Activated T-helper 1 cell treated with anti-CD3 and anti-CD28 coated beads, Interleukin-12 subunit alpha, Interleukin-12 subunit beta, Interleukin-2, Interleukin-4 antibody, amounts not matched to agents 30 ng/mL and 10 ng/mL and 1 ng/mL, durations not matched to agents 14 hours and 24 hours and 36 hours (primary cell): ENCODE measurements at regions of chr6 and their contacts with region 1.

Region 1: DNA sequence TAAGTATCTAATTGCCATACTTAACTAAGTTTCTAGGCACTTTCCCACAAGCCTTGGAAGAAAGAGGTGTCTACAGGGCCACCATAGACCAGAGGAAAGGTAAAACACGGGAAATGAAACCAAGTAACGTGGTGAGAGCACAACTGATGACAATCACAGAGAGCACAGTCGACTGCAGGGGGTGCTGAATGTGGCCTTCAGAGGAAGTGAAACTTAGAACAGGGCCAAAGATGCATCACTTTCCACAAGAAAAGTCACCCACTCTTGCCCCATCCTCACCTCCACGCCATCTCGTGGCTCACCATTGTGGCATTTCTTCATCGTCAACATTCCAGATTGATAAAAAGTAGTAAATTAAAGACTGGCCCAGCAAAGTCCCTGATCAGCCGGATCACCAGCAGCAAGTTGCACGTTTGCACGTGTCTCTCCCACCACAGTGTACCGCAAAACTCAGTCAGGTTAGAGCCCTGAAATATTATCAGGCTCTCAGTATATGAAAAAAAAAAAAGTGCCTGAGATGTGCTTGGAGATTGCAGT is 31.4 kb downstream of the HIVEP2 start:
- DNase-seq: peak; percentile 73
- H3K4me3 Mint-ChIP-seq: peak overlapping the region; percentile 64
- H3K27ac Mint-ChIP-seq: peak overlapping the region; percentile 92
- H3K4me1 Mint-ChIP-seq: peaks cover 63% of the 10 kb centered on the region
- H3K27me3 Mint-ChIP-seq: no peaks in the 10 kb centered on the region

Region 2: DNA sequence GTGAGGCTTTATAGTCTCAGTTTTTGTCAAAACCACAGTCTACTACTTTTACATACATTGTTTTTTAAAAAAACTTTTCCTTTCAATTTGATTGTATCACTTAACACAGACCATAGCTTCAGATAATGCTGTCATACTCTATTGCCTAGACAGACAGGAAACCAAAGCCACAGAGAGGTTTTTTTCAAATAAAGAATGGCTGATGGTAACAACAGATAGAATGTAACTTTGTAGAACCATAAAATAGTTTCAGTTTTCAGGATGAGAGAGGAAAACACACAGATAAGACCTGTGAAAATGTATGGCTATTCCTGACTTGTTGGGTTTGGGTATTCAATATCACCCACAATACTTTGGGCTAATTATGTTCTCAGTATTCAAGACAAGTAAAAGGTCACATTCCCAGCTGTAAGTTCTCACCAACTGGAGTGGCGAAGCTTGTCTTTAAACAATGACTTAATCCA is 517.8 kb before region 1 on chr6:
- intact Hi-C with region 1: loop called (anchors 5 kb)
- DNase-seq: peak; percentile 12
- H3K4me3 Mint-ChIP-seq: no peak overlapping the region
- H3K27ac Mint-ChIP-seq: peak overlapping the region; percentile 10
- H3K4me1 Mint-ChIP-seq: peaks cover 15% of the 10 kb centered on the region
- H3K27me3 Mint-ChIP-seq: peaks cover 56% of the 10 kb centered on the region

Region 3: GRCh38 chr6:142763205-142763604 is 150.4 kb before region 1 on chr6:
- intact Hi-C with region 1: no loop called
- DNase-seq: no peak
- H3K4me3 Mint-ChIP-seq: no peak overlapping the region
- H3K27ac Mint-ChIP-seq: no peak overlapping the region
- H3K4me1 Mint-ChIP-seq: peaks cover 16% of the 10 kb centered on the region
- H3K27me3 Mint-ChIP-seq: no peaks in the 10 kb centered on the region

Region 4: DNA sequence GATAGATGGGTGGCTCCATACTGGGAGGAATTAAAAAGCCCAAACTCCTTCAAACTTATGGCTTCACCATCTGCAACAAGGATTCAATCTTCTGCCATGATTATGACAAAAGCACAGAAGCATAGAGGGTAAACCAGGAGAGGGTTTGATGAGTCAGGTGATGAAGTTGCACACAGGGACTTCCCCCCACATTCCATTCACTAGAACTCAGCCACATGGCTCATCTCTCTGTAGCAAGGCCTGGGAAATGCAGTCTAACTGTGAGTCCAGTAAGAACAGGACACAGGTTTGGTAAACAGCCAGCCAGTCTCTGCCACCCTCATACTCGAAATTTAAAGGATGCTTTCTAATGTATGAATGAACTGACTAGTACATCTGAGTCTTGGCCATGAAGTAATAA is 111.5 kb before region 1 on chr6:
- intact Hi-C with region 1: loop called (anchors 1 kb)
- DNase-seq: no peak
- H3K4me3 Mint-ChIP-seq: peak overlapping the region; percentile 55
- H3K27ac Mint-ChIP-seq: peak overlapping the region; percentile 82
- H3K4me1 Mint-ChIP-seq: peaks cover 80% of the 10 kb centered on the region
- H3K27me3 Mint-ChIP-seq: no peaks in the 10 kb centered on the region

Region 5: DNA sequence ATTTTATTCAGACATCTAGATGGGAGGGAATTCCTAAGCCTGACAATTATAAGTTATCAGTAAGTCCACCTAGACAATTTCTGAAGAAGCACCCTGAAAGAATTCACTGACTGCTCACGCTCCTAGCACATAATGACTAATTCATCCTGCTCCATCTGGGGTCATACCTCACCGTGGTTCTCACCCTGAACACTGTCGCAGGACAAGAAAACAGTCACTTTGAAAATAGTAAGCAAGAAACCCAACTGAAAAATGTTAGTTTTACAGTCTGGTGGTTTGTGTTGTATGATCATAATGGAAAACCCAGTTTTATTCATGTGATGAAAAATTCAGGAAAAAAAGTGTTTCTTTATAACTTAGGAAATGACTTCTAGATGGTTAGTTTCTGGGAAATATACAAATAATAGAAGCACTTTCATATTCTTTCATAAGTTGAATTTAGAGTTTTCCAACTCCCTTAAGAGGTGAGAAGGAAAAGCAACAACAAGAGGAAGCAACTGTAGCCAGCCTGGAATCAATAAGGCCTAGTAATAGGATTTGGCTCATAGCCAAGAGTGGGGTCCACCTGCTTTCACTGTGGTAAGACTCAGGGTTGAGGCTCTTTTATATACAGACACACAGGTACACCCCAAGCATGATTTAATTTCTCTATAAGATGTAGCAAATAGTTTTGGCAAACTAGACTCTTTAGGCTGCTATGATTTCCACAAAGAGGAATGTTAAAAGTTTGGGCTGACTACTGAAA is 62.7 kb before region 1 on chr6:
- intact Hi-C with region 1: loop called (anchors 1 kb)
- DNase-seq: peak; percentile 41
- H3K4me3 Mint-ChIP-seq: peak overlapping the region; percentile 40
- H3K27ac Mint-ChIP-seq: peak overlapping the region; percentile 89
- H3K4me1 Mint-ChIP-seq: peaks cover 91% of the 10 kb centered on the region
- H3K27me3 Mint-ChIP-seq: no peaks in the 10 kb centered on the region

Region 6: DNA sequence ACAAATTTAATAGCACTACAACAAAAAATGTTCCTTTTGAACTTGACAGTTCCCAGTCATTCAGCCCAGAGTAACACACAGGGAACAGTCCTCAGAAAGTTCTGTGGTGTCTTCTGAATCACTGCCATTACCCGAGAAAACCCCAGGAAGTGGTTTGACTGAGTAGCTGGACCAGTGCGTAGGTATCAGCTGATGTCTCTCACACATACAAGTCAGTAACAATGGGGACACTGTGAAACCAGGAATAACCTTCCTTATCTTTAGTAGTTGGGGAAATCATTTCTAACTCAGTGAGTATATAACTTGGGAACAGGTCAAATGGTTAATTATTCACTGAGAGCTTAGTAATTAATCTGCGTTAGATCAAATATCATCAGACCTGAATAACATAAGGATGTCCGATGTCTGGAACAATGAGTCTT is 41.7 kb before region 1 on chr6:
- intact Hi-C with region 1: loop called (anchors 1 kb)
- DNase-seq: peak; percentile 55
- H3K4me3 Mint-ChIP-seq: peak overlapping the region; percentile 40
- H3K27ac Mint-ChIP-seq: peak overlapping the region; percentile 78
- H3K4me1 Mint-ChIP-seq: peaks cover 86% of the 10 kb centered on the region
- H3K27me3 Mint-ChIP-seq: no peaks in the 10 kb centered on the region

Region 7: GRCh38 chr6:142902636-142903053 is 10.9 kb before region 1 on chr6:
- intact Hi-C with region 1: loop called (anchors 1 kb)
- DNase-seq: peak; percentile 76
- H3K4me3 Mint-ChIP-seq: peak overlapping the region; percentile 49
- H3K27ac Mint-ChIP-seq: peak overlapping the region; percentile 91
- H3K4me1 Mint-ChIP-seq: peaks cover 63% of the 10 kb centered on the region
- H3K27me3 Mint-ChIP-seq: no peaks in the 10 kb centered on the region

Region 8: DNA sequence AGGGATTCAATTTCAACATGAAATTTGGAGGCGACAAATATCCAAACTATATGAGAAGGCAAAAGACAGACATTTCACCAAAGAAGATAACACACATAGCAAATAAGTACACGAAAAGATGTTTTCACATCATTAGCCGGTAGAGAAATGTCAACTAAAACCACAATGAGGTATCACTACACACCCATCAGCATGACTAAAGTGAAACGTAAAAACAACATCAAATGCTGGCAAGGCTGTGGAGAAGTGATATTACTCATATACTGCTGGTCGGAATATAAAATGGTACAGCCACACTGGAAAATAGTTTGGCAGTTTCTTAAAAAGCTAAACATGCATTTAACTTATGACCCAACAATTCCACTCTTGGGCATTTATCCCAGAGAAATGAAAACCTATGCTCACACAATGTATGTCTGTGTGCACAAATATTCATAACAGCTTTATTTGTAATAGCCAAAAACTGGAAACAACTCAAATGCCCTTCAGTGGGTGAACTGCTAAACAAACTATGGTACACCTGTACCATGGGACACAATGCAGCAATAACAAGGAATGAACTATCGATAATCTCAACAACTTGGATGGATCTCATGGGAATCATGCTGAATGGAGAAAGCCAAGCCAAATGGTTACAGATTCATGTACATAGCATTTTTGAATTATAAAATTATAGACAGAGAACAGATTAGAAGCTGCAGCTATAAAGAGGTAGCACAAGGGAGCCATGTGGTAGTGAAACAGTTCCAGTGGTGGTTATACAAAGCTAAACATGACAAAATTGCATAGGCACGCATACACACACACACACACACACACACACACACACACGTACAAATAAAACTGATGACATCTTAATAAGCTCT is 528.3 kb after region 1 on chr6:
- intact Hi-C with region 1: loop called (anchors 5 kb)
- DNase-seq: peak; percentile 13
- H3K4me3 Mint-ChIP-seq: peak overlapping the region; percentile 53
- H3K27ac Mint-ChIP-seq: peak overlapping the region; percentile 91
- H3K4me1 Mint-ChIP-seq: peaks cover 61% of the 10 kb centered on the region
- H3K27me3 Mint-ChIP-seq: no peaks in the 10 kb centered on the region